MCF 10A (cell line): ENCODE measurements at regions of chr13 and their contacts with region 1.

Region 1: DNA sequence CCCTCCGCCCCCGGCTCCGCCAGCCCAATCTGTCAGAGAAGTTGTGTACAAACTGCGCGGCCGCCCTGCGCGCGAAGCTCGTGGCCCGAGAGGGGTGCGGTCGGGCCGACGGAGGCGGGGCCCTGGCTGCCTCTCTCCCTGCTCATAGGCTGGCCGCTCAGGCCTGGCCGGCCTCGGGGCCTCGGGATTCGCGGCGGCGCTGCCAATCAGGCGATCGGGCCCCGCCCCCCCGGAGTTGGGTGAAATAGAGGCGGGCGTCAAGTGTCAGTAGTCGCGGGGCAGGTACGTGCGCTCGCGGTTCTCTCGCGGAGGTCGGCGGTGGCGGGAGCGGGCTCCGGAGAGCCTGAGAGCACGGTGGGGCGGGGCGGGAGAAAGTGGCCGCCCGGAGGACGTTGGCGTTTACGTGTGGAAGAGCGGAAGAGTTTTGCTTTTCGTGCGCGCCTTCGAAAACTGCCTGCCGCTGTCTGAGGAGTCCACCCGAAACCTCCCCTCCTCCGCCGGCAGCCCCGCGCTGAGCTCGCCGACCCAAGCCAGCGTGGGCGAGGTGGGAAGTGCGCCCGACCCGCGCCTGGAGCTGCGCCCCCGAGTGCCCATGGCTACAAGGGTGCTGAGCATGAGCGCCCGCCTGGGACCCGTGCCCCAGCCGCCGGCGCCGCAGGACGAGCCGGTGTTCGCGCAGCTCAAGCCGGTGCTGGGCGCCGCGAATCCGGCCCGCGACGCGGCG is at the start of gene KLF5:
- DNase-seq: peak; percentile 99
- H3K4me3 Mint-ChIP-seq: peak within 1 kb of the TSS; percentile 83
- H3K27ac Mint-ChIP-seq: peak within 1 kb of the TSS; percentile 92
- H3K4me1 Mint-ChIP-seq: peaks cover 34% of the 10 kb centered on the region
- H3K27me3 Mint-ChIP-seq: no peaks in the 10 kb centered on the region
- CTCF ChIP-seq: no peak
- total RNA-seq, gene KLF5: 197 and 226 TPM in 2 replicates

Region 2: DNA sequence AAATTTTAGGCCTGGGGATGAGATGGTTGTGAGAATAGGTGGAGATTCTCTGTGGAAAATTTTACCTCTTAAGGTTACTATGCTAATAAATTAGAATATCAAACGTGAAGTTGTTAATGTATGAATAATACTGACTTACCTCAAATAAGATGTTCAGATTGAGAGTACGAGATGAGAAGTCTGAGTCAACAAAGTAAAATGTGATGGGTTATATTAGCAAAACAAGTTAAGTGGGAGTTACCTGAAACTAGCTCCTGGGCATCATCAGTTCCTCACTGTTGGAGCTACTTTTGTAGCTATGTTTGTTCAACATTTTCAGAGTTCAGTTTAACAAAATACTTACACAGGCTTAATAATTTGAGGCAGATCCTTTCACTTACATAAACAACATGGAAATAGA is 168.4 kb before region 1 on chr13:
- CTCF ChIA-PET with region 1: no interaction called
- POLR2A ChIA-PET with region 1: interaction called, 4 read pairs
- intact Hi-C with region 1: loop called (anchors 5 kb)
- DNase-seq: no peak
- H3K4me3 Mint-ChIP-seq: no peak overlapping the region
- H3K27ac Mint-ChIP-seq: no peak overlapping the region
- H3K4me1 Mint-ChIP-seq: peaks cover 17% of the 10 kb centered on the region
- H3K27me3 Mint-ChIP-seq: no peaks in the 10 kb centered on the region
- CTCF ChIP-seq: no peak

Region 3: GRCh38 chr13:73074036-73074435 is 15.1 kb after region 1 on chr13:
- CTCF ChIA-PET with region 1: interaction called, 5 read pairs
- POLR2A ChIA-PET with region 1: interaction called, 157 read pairs
- intact Hi-C with region 1: no loop called
- DNase-seq: no peak
- H3K4me3 Mint-ChIP-seq: peak overlapping the region; percentile 39
- H3K27ac Mint-ChIP-seq: peak overlapping the region; percentile 80
- H3K4me1 Mint-ChIP-seq: peaks cover 39% of the 10 kb centered on the region
- H3K27me3 Mint-ChIP-seq: no peaks in the 10 kb centered on the region
- CTCF ChIP-seq: no peak

Region 4: DNA sequence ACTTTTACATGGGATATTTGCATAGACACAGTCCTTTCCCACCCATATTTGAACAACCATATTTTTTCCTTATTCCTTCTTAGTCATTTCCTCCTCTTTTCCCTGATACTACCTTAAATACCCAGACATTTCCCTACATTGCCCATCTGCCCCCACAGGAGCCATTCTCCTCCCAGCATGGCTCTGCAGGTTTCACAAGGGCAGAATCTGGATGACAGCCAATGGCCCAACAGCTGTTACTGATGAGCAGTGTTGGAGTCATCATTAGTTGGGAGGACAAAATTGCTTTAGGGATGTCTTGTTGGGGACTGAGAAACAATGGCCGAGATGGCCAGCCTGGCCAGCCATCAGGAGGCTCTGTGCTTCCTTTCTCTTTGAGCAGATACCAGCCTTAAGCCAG is 209.4 kb after region 1 on chr13:
- CTCF ChIA-PET with region 1: interaction called, 4 read pairs
- POLR2A ChIA-PET with region 1: interaction called, 11 read pairs
- intact Hi-C with region 1: no loop called
- DNase-seq: peak; percentile 94
- H3K4me3 Mint-ChIP-seq: no peak overlapping the region
- H3K27ac Mint-ChIP-seq: no peak overlapping the region
- H3K4me1 Mint-ChIP-seq: peaks cover 20% of the 10 kb centered on the region
- H3K27me3 Mint-ChIP-seq: no peaks in the 10 kb centered on the region
- CTCF ChIP-seq: no peak

Region 5: GRCh38 chr13:73417015-73417623 is 358.2 kb after region 1 on chr13:
- CTCF ChIA-PET with region 1: interaction called, 8 read pairs
- POLR2A ChIA-PET with region 1: interaction called, 43 read pairs
- intact Hi-C with region 1: loop called (anchors 2 kb)
- DNase-seq: peak; percentile 53
- H3K4me3 Mint-ChIP-seq: no peak overlapping the region
- H3K27ac Mint-ChIP-seq: no peak overlapping the region
- H3K4me1 Mint-ChIP-seq: peaks cover 25% of the 10 kb centered on the region
- H3K27me3 Mint-ChIP-seq: no peaks in the 10 kb centered on the region
- CTCF ChIP-seq: peak; percentile 25

Region 6: DNA sequence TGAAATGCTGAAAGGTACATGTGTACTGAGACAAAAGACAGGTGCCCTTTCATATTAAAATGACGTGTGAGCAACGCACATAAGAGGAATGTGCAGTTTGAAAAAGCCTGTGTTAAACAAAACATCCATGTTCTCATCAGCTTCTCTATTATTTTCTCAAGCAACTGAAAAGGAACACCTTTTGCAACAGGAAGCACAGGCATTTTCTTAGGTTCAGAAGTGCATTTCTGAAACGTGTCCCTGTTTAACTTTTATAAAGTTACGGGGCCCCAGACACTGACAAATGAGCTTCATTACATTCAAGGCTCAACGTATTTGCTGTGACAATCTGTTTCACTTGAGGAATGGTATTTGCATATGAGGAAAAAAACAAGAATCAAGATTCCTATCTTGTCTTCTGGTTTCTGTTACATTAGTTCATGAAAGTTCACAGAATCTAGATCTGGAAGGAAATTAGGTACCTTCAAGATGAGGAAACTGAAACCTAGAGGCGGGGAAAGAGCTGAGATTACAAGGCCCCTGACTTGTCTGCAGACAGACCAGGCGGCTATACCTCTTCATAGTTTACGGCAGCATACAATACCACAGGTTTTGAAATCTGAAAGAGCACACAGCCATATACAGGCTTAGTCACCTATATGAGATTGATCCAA is 643.6 kb after region 1 on chr13:
- CTCF ChIA-PET with region 1: interaction called, 4 read pairs
- POLR2A ChIA-PET with region 1: interaction called, 80 read pairs
- intact Hi-C with region 1: no loop called
- DNase-seq: peak; percentile 84
- H3K4me3 Mint-ChIP-seq: peak overlapping the region; percentile 63
- H3K27ac Mint-ChIP-seq: peak overlapping the region; percentile 94
- H3K4me1 Mint-ChIP-seq: peaks cover 33% of the 10 kb centered on the region
- H3K27me3 Mint-ChIP-seq: no peaks in the 10 kb centered on the region
- CTCF ChIP-seq: no peak